ENCODE measurements at regions of chr20 and their contacts with region 1.

Region 1: GRCh38 chr20:37243076-37243936 is 18.3 kb downstream of the GHRH start:
- DNase-seq: peak in 1 of 2 experiments; percentile 66
- H3K4me3 ChIP-seq: no peak overlapping the region
- H3K27ac ChIP-seq: 0 out of 2 replicates have a peak overlapping the region, but pooled peaks have one; percentile 48
- H3K4me1 ChIP-seq: peaks cover 8 to 15% (median 11%) of the 10 kb centered on the region in 4 experiments; a peak in 6 of 7 replicates
- H3K27me3 ChIP-seq: no peaks in the 10 kb centered on the region
- CTCF ChIP-seq: peak; percentile 58 to 73 (median 65)
- EP300 ChIP-seq: no peak
- POLR2A ChIP-seq: no peak
- RAD21 ChIP-seq: peak; percentile 38 to 63

Region 2: GRCh38 chr20:37090407-37090806 is 152.9 kb before region 1 on chr20:
- CTCF ChIA-PET with region 1: no interaction called
- POLR2A ChIA-PET with region 1: no interaction called
- DNase-seq: no peak
- H3K4me3 ChIP-seq: no peak overlapping the region
- H3K27ac ChIP-seq: no peak overlapping the region
- H3K4me1 ChIP-seq: peaks cover 0 to 5% (median 2%) of the 10 kb centered on the region in 4 experiments; a peak in 3 of 7 replicates
- H3K27me3 ChIP-seq: no peaks in the 10 kb centered on the region
- CTCF ChIP-seq: no peak
- EP300 ChIP-seq: no peak
- POLR2A ChIP-seq: no peak
- RAD21 ChIP-seq: no peak

Region 3: DNA sequence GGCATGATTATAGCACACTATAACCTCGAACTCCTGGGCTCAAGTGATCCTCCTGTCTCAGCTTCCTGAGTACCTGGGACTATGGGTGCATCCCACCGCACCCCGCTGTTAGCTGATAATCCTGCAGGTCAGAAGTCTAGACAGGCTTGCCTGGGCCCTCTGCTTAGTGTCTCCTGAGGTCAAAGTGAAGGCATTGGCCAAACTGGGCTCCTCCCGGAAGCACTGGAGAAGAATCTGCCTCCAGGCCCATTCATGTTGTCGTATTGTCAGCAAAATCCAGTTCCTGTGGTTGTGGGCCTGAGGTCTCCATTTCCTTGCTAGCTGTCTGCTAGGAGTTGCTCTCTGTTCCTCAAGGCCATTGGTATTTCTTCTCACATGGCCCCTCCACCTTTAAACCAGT is 57.6 kb before region 1 on chr20:
- CTCF ChIA-PET with region 1: no interaction called
- POLR2A ChIA-PET with region 1: no interaction called
- DNase-seq: no peak
- H3K4me3 ChIP-seq: no peak overlapping the region
- H3K27ac ChIP-seq: no peak overlapping the region
- H3K4me1 ChIP-seq: peaks cover 0 to under 1% (median 0%) of the 10 kb centered on the region in 4 experiments; a peak in 3 of 7 replicates
- H3K27me3 ChIP-seq: no peaks in the 10 kb centered on the region
- CTCF ChIP-seq: no peak
- EP300 ChIP-seq: no peak
- POLR2A ChIP-seq: no peak
- RAD21 ChIP-seq: no peak

Region 4: DNA sequence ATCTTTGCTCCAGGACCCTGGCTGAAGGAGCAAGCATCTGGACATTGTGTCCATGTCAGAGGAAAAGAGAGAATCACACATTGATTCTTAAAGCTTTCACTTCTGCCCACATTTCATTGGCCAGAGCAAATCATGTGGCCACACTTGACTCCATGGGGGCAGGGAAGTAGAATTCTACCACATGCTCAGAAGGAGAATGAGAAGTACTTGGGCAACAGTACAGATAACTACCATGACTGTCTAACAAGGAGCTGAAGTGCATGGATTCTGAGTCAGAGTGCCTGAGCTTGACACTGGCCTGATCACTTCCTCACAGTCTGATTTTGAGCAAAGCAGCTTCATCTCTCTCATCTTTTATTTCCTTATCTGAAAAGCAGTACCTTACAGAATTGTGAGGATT is 20.3 kb before region 1 on chr20:
- CTCF ChIA-PET with region 1: interaction called, 22 read pairs
- POLR2A ChIA-PET with region 1: interaction called, 4 read pairs
- DNase-seq: no peak
- H3K4me3 ChIP-seq: no peak overlapping the region
- H3K27ac ChIP-seq: no peak overlapping the region
- H3K4me1 ChIP-seq: peaks cover 0 to 9% (median 0%) of the 10 kb centered on the region in 4 experiments; a peak in 3 of 7 replicates
- H3K27me3 ChIP-seq: no peaks in the 10 kb centered on the region; a peak in 1 of 7 replicates
- CTCF ChIP-seq: no peak
- EP300 ChIP-seq: no peak
- POLR2A ChIP-seq: no peak
- RAD21 ChIP-seq: no peak

Region 5: GRCh38 chr20:37257988-37258387 is 14.7 kb after region 1 on chr20:
- CTCF ChIA-PET with region 1: interaction called, 8 read pairs
- POLR2A ChIA-PET with region 1: interaction called, 15 read pairs
- DNase-seq: peak in 1 of 2 experiments; percentile 68
- H3K4me3 ChIP-seq: no peak overlapping the region
- H3K27ac ChIP-seq: no peak overlapping the region
- H3K4me1 ChIP-seq: peaks cover 0 to 15% (median 6%) of the 10 kb centered on the region in 4 experiments; a peak in 6 of 7 replicates
- H3K27me3 ChIP-seq: no peaks in the 10 kb centered on the region
- CTCF ChIP-seq: peak in 2 of 3 experiments; percentile 10 to 13; a peak in 1 of 4 replicates
- EP300 ChIP-seq: no peak
- POLR2A ChIP-seq: no peak
- RAD21 ChIP-seq: peak in 1 of 2 experiments; percentile 28; a peak in 1 of 4 replicates

Measured in H1 (cell line).